Common myeloid progenitor, CD34-positive (primary cell): ENCODE measurements at regions of chr1 and their contacts with region 1.

Region 1: GRCh38 chr1:111739194-111739924 is at the start of gene INKA2:
- DNase-seq: peak; percentile 63 to 86 (median 80)
- H3K4me3 ChIP-seq: peak within 1 kb of the TSS; percentile 42 to 80 (median 64)
- H3K27ac ChIP-seq: peak within 1 kb of the TSS in 1 of 2 experiments; percentile 30
- H3K4me1 ChIP-seq: peaks cover 4 to 65% (median 40%) of the 10 kb centered on the region in 4 experiments
- H3K27me3 ChIP-seq: peaks cover 0 to 27% (median 13%) of the 10 kb centered on the region in 5 experiments

Region 2: DNA sequence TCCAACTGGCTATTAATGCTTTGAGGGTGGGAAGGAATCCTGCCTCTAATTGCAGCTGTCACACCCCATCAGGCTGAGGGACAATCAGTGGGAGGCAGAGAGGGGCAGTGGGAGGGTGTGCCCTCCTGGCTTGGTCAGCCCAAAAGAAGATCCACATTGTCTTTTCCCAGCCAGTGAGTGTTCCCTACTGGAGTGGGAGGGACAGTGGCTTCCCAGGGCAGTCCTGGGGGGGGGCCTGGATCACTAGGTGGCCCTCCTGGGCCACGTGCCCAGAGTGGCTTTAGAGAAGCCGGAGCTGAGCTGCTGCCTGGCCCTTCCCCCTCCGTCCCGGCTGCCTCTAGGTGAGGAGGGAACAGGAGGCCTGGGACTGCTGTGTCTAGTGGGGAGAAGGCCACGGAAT is 14.2 kb before region 1 on chr1:
- CTCF ChIA-PET with region 1: interaction called, 37 read pairs
- POLR2A ChIA-PET with region 1: interaction called, 3 read pairs
- DNase-seq: no peak
- H3K4me3 ChIP-seq: no peak overlapping the region
- H3K27ac ChIP-seq: no peak overlapping the region
- H3K4me1 ChIP-seq: no peaks in the 10 kb centered on the region
- H3K27me3 ChIP-seq: no peaks in the 10 kb centered on the region

Region 3: GRCh38 chr1:111755331-111756123 is 16.2 kb after region 1 on chr1 and contains the start of gene DDX20:
- CTCF ChIA-PET with region 1: interaction called, 39 read pairs
- POLR2A ChIA-PET with region 1: interaction called, 6 read pairs
- DNase-seq: peak; percentile 96 to 98 (median 98)
- H3K4me3 ChIP-seq: peak within 1 kb of the TSS; percentile 57 to 92 (median 85)
- H3K27ac ChIP-seq: peak within 1 kb of the TSS; percentile 92 to 96
- H3K4me1 ChIP-seq: peaks cover 6 to 31% (median 19%) of the 10 kb centered on the region in 4 experiments
- H3K27me3 ChIP-seq: no peaks in the 10 kb centered on the region